ENCODE measurements at regions of chr12 and their contacts with region 1.

Region 1: DNA sequence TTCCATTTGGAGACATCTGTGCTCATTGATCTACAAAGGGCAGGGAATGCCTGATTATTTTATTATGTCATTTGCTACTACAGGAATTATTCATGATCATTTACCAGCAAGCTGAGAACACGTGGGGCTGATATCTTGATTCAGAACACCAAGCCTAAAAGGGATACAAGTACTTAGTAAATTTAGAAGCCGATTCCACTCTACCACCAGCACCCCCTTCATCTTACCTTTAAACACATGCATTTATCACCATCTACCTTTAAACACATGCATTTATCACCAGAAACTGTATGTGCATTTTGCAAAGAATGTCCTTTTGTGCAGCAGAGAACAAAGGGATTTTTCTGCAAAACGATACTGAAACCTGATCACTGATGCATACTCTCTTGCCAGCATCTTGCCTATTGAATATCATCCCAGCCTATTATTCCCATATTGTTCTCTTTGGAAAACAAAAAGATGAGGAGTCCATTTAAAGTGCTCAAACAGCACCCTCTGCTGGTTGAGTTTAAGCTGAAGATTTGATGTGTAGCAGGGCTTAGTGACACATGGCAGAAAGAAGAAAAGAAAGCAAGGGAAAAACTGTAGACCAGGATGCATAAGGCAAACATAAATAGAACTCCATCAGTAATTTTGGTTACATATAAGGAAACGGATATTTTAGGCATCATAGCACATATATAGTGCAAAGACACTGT is 132.6 kb upstream of the PLEKHG7 start:
- DNase-seq: peak; percentile 87
- H3K4me3 ChIP-seq: no peak overlapping the region
- H3K27ac ChIP-seq: no peak overlapping the region
- H3K4me1 ChIP-seq: no peaks in the 10 kb centered on the region
- H3K27me3 ChIP-seq: no peaks in the 10 kb centered on the region
- CTCF ChIP-seq: peak; percentile 85

Region 2: DNA sequence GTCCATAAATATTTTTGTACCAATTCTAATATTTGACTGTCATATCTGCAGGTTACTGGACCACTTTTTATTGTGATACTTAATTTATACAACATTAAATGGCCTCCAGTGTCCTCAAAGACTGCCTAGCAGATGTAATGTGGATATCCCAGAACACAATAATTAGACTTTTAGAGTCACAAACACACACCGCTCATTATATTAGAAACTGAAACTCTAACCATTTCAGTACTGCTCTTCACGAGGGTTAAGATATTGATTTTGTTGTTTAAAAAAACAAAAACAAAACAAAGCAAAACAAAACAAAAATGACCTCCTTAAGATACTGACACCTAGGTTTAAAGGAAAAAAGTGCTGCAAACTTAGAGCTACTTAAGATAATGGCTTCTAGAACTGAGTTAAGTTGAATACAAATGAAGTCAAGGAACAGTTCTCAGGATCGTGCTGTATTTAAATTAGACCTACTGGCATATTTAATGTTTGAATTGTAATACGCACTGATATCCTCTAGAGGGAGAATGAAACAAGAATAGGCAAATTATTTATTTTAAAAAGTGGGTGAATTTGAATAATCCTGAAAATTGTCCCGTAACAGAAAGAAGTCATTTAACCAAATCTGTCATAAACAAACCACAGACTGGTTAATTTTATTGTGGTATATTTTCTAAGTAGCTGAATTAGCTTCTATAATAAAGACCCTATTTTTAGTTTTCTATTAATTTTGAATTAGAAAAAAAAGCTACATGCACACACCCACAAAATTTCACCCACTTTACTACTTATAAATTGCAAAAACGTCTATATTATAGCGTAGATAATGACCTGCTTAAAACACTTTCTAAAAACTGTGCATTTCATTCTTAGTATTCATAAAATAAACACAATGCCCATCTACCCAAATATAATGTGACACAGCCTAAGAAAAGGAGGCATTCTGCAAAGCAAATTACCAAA is 992.3 kb before region 1 on chr12:
- CTCF ChIA-PET with region 1: no interaction called
- POLR2A ChIA-PET with region 1: no interaction called
- intact Hi-C with region 1: loop called (anchors 5 kb)
- DNase-seq: peak; percentile 39
- H3K4me3 ChIP-seq: no peak overlapping the region
- H3K27ac ChIP-seq: no peak overlapping the region
- H3K4me1 ChIP-seq: peaks cover 28% of the 10 kb centered on the region
- H3K27me3 ChIP-seq: peaks cover 18% of the 10 kb centered on the region
- CTCF ChIP-seq: peak; percentile 68

Region 3: GRCh38 chr12:91811481-91812287 is 758.5 kb before region 1 on chr12:
- CTCF ChIA-PET with region 1: interaction called, 6 read pairs
- POLR2A ChIA-PET with region 1: no interaction called
- intact Hi-C with region 1: loop called (anchors 2 kb)
- DNase-seq: peak; percentile 68
- H3K4me3 ChIP-seq: no peak overlapping the region
- H3K27ac ChIP-seq: no peak overlapping the region
- H3K4me1 ChIP-seq: no peaks in the 10 kb centered on the region
- H3K27me3 ChIP-seq: no peaks in the 10 kb centered on the region
- CTCF ChIP-seq: peak; percentile 94

Region 4: DNA sequence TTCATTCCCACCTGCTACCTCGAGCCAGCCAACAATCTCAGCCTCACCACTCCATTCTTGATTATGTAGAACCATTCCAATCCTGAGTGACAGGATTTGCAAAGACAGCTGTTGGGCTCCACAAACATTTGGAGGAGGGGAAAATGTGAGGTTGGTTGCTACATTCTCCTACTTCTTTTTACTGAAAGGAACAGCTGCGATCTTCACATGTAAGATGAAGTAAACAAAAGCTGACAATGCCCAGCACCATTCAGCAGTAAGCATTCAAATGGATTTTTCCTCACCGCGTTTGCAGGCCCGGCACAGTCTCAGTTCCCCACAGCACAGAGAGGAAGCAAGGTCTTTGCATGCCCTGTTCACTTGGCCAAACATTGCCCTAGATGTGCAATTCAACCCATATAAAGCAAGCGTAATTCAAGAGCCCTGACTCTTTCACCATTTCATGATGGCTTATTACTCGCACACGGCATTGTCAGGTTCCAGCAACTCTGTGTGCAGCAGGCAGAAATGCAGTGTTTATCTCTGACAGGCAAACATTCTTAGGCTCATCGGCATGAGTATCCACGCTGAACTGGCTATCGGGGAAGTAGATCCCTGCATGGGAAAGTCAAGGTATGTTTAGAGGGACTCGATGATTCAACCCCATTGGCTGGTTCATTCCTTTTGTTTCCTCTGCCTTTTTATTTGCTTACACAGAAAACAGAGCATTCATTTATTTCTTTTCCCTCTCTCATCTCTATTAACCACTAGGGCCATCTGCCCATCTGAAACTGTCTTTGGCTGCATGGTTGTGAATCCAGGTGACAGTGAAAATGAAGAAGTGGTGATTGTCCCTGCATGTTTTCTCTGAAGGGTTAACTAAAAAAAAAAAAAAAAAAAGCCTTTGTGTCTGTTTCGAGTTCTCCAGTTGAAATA is 103.6 kb before region 1 on chr12:
- CTCF ChIA-PET with region 1: no interaction called
- POLR2A ChIA-PET with region 1: no interaction called
- intact Hi-C with region 1: no loop called
- DNase-seq: no peak
- H3K4me3 ChIP-seq: no peak overlapping the region
- H3K27ac ChIP-seq: no peak overlapping the region
- H3K4me1 ChIP-seq: no peaks in the 10 kb centered on the region
- H3K27me3 ChIP-seq: no peaks in the 10 kb centered on the region
- CTCF ChIP-seq: no peak

Region 5: GRCh38 chr12:92649511-92650227 is 79.5 kb after region 1 on chr12:
- CTCF ChIA-PET with region 1: no interaction called
- POLR2A ChIA-PET with region 1: no interaction called
- intact Hi-C with region 1: loop called (anchors 5 kb)
- DNase-seq: peak; percentile 76
- H3K4me3 ChIP-seq: no peak overlapping the region
- H3K27ac ChIP-seq: no peak overlapping the region
- H3K4me1 ChIP-seq: no peaks in the 10 kb centered on the region
- H3K27me3 ChIP-seq: peaks cover 8% of the 10 kb centered on the region
- CTCF ChIP-seq: peak; percentile 75

Region 6: GRCh38 chr12:92771001-92771400 is 200.8 kb after region 1 on chr12:
- CTCF ChIA-PET with region 1: no interaction called
- POLR2A ChIA-PET with region 1: no interaction called
- intact Hi-C with region 1: no loop called
- DNase-seq: no peak
- H3K4me3 ChIP-seq: no peak overlapping the region
- H3K27ac ChIP-seq: no peak overlapping the region
- H3K4me1 ChIP-seq: peaks cover 40% of the 10 kb centered on the region
- H3K27me3 ChIP-seq: no peaks in the 10 kb centered on the region
- CTCF ChIP-seq: no peak

Measured in A673 (cell line).